Ovary (tissue), 10 donors: ENCODE measurements at regions of chr13 and their contacts with region 1.

Region 1: GRCh38 chr13:105725887-105726286 is 809.6 kb downstream of the EFNB2 start:
- DNase-seq: no peak
- H3K4me3 ChIP-seq: no peak overlapping the region
- H3K27ac ChIP-seq: no peak overlapping the region
- H3K4me1 ChIP-seq: peaks cover 1% of the 10 kb centered on the region
- H3K27me3 ChIP-seq: no peaks in the 10 kb centered on the region
- CTCF ChIP-seq: no peak
- EP300 ChIP-seq: no peak
- POLR2A ChIP-seq: no peak

Region 2: DNA sequence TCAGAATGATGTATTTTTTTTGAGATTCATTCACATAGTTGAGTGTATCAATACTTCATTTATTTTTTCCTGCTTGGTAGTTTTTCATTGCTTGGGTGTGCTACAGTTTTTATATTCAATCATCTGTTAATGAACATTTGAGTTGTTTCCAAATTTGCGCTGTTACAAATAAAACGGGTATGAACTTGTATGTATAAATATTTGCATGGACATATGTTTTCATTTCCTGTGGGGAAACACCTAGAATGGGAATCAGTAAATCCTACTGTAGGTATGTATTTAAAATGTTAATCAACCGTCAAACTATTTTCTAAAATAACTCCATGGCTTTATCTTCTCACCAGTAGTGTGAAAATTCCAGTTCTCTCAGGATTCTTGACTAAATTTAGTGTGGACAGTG is 16.7 kb before region 1 on chr13:
- intact Hi-C with region 1: loop called in 1 of 4 experiments (anchors 2 kb)
- DNase-seq: no peak
- H3K4me3 ChIP-seq: no peak overlapping the region
- H3K27ac ChIP-seq: no peak overlapping the region
- H3K4me1 ChIP-seq: no peaks in the 10 kb centered on the region
- H3K27me3 ChIP-seq: no peaks in the 10 kb centered on the region
- CTCF ChIP-seq: no peak
- EP300 ChIP-seq: no peak
- POLR2A ChIP-seq: no peak

Region 3: GRCh38 chr13:105952233-105952972 is 226.5 kb after region 1 on chr13:
- intact Hi-C with region 1: no loop called
- DNase-seq: no peak
- H3K4me3 ChIP-seq: no peak overlapping the region
- H3K27ac ChIP-seq: no peak overlapping the region
- H3K4me1 ChIP-seq: no peaks in the 10 kb centered on the region
- H3K27me3 ChIP-seq: no peaks in the 10 kb centered on the region
- CTCF ChIP-seq: no peak
- EP300 ChIP-seq: no peak
- POLR2A ChIP-seq: no peak